ENCODE measurements at regions of chr3 and their contacts with region 1.

Region 1: GRCh38 chr3:172167892-172168648 is 128.7 kb downstream of the FNDC3B start:
- H3K4me3 Mint-ChIP-seq: no peak overlapping the region
- H3K27ac Mint-ChIP-seq: no peak overlapping the region
- H3K4me1 Mint-ChIP-seq: peaks cover 31% of the 10 kb centered on the region
- H3K27me3 Mint-ChIP-seq: no peaks in the 10 kb centered on the region

Region 2: DNA sequence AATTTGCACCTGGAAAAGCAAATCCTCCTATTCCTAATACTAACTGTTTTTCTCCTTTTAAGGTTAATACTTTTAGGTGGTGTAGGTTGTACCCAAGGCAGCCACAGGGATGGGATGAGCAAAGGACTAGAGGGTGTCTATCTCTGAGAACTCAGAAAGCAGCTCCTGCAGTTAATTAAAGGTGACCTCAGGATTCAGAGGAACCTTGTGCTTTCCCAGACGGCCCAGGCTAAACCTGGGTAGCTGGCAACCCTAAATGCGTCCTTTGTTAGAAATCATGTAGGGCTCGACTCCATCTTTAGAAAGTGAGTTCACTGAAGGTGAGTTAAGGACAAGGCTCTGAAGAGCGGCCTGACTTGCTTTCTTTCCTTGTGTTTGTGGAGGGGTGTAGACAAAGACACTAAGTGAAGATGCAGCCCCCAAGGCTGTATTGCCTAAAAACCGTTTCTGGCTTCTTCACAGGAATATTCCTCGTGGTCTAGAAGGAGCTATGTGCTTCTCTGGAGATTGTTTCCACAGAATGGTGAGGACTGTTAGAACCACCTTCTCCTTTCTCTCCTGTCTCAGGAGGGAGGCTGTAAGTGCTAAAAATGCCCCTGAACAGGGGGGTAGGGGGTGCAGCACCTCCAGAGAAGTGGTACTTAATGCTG is 113.8 kb before region 1 on chr3:
- intact Hi-C with region 1: no loop called
- H3K4me3 Mint-ChIP-seq: no peak overlapping the region
- H3K27ac Mint-ChIP-seq: no peak overlapping the region
- H3K4me1 Mint-ChIP-seq: peaks cover 36% of the 10 kb centered on the region
- H3K27me3 Mint-ChIP-seq: no peaks in the 10 kb centered on the region

Region 3: GRCh38 chr3:172270557-172271166 is 102.6 kb after region 1 on chr3:
- intact Hi-C with region 1: loop called (anchors 5 kb)
- H3K4me3 Mint-ChIP-seq: no peak overlapping the region
- H3K27ac Mint-ChIP-seq: peak overlapping the region; percentile 47
- H3K4me1 Mint-ChIP-seq: peaks cover 21% of the 10 kb centered on the region
- H3K27me3 Mint-ChIP-seq: no peaks in the 10 kb centered on the region